Left ventricle myocardium inferior (tissue), 1 donor: ENCODE measurements at regions of chr9 and their contacts with region 1.

Region 1: DNA sequence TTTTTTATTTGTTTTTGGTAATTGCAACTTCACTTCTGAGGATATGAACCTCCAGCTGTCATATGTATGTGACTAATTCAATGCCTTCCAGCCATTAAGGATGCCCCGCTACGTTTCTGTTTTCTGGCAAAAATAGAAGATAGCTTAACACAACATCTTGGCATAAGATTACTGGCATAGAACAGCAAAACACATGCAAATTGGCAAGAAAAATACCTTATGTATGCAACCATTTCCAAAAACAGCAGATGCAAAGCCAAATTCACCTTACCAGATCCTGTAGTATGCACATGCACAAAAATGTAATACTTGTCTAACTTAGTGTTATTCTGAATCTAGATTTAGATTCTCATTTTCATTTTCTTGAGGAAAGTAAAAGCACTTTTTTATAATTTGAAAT is 461.1 kb upstream of the CYLC2 start:
- DNase-seq: no peak
- H3K4me3 ChIP-seq: no peak overlapping the region
- H3K27ac ChIP-seq: no peak overlapping the region
- H3K4me1 ChIP-seq: no peaks in the 10 kb centered on the region
- H3K27me3 ChIP-seq: no peaks in the 10 kb centered on the region
- CTCF ChIP-seq: no peak

Region 2: GRCh38 chr9:102355982-102356381 is 178.0 kb before region 1 on chr9:
- intact Hi-C with region 1: no loop called
- DNase-seq: no peak
- H3K4me3 ChIP-seq: no peak overlapping the region
- H3K27ac ChIP-seq: no peak overlapping the region
- H3K4me1 ChIP-seq: no peaks in the 10 kb centered on the region
- H3K27me3 ChIP-seq: no peaks in the 10 kb centered on the region
- CTCF ChIP-seq: no peak

Region 3: GRCh38 chr9:102479191-102479590 is 54.8 kb before region 1 on chr9:
- intact Hi-C with region 1: loop called (anchors 10 kb)
- DNase-seq: no peak
- H3K4me3 ChIP-seq: no peak overlapping the region
- H3K27ac ChIP-seq: no peak overlapping the region
- H3K4me1 ChIP-seq: no peaks in the 10 kb centered on the region
- H3K27me3 ChIP-seq: no peaks in the 10 kb centered on the region
- CTCF ChIP-seq: no peak